HepG2 (cell line): ENCODE measurements at regions of chr7 and their contacts with region 1.

Region 1: DNA sequence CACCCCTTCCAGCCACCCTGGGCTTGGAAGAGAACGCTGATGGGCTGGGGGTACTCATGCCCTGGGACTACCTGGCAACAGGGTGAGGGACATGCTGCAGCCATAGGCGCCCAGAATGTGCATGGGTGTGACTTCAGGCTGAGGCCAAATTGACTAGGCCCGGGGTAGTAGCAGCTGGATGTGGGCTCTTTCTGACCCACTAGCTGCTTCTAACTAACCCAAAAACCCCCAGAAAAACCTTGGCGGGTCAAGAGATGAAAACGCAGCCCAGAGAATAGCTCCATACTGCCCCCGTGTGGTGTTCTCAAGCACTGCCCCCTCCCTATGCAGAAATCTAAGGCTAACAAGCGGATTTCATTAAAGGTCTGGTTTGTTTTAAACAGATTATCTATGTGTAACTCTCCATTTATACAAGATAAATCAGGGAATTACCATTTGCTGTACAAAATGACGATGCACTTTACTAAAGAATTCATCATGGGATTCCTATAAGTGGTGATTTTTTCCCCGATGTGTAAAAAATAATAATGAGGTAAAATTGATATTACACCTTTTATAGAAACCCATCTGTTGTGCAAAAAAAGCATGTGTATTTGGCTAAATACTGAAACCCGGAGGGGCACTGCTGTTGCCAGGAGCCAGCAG is 4.2 kb downstream of the SMARCD3 start:
- DNase-seq: no peak
- ATAC-seq: no peak
- H3K4me3 ChIP-seq: peak overlapping the region in 1 of 3 experiments; percentile 66; a peak in 1 of 6 replicates
- H3K27ac ChIP-seq: no peak overlapping the region
- H3K4me1 ChIP-seq: peaks cover 68% of the 10 kb centered on the region
- H3K27me3 ChIP-seq: peaks cover 7 to 40% of the 10 kb centered on the region in 2 experiments; a peak in 3 of 5 replicates
- CTCF ChIP-seq: peak; percentile 66
- EP300 ChIP-seq: no peak
- POLR2A ChIP-seq: no peak
- RAD21 ChIP-seq: no peak

Region 2: GRCh38 chr7:151080522-151081169 is 163.7 kb before region 1 on chr7 and contains the start of gene FASTK:
- CTCF ChIA-PET with region 1: no interaction called
- POLR2A ChIA-PET with region 1: no interaction called
- in situ Hi-C with region 1: no loop called
- intact Hi-C with region 1: loop called (anchors 10 kb)
- DNase-seq: peak; percentile 77
- ATAC-seq: peak; percentile 72
- H3K4me3 ChIP-seq: peak within 1 kb of the TSS; percentile 85 to 96 (median 88)
- H3K27ac ChIP-seq: peak within 1 kb of the TSS; percentile 85
- H3K4me1 ChIP-seq: peaks cover 45% of the 10 kb centered on the region
- H3K27me3 ChIP-seq: no peaks in the 10 kb centered on the region; a peak in 1 of 5 replicates
- CTCF ChIP-seq: no peak
- EP300 ChIP-seq: peak in 1 of 2 experiments; percentile 20; a peak in 1 of 4 replicates
- POLR2A ChIP-seq: peak in 1 of 2 experiments; percentile 77; a peak in 2 of 4 replicates
- RAD21 ChIP-seq: peak; percentile 42; the same call in 1 of the 2 replicates
- total RNA-seq, gene FASTK: 33.0 and 52.9 TPM in 2 replicates

Region 3: DNA sequence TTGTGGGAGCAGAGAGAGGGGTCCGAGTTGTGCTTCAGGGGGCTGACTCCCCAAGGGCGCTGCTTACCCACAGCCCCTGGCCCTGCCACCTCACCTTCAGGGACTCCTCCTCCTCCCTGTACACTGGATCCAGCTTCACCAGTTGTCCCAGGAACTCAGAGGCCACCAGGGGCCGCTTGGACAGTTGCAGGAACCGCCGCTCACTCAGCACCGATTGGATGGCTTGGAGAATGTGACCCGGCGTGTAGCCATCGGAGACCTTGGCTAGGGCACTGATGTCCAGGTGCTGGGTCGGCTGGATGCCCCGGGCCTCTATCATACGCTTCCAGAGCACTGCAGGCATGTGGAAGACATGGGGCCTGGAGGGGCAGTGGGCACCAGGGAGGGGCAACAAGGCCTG is 52.8 kb before region 1 on chr7:
- CTCF ChIA-PET with region 1: interaction called, 6 read pairs
- POLR2A ChIA-PET with region 1: no interaction called
- in situ Hi-C with region 1: no loop called
- intact Hi-C with region 1: loop called (anchors 2 kb)
- DNase-seq: peak; percentile 39
- ATAC-seq: peak; percentile 89
- H3K4me3 ChIP-seq: no peak overlapping the region
- H3K27ac ChIP-seq: no peak overlapping the region
- H3K4me1 ChIP-seq: no peaks in the 10 kb centered on the region
- H3K27me3 ChIP-seq: peaks cover 9 to 76% of the 10 kb centered on the region in 2 experiments; a peak in 4 of 5 replicates
- CTCF ChIP-seq: peak; percentile 61
- EP300 ChIP-seq: no peak
- POLR2A ChIP-seq: no peak
- RAD21 ChIP-seq: no peak

Region 4: GRCh38 chr7:151232091-151232916 is 12.0 kb before region 1 on chr7 and contains the start of gene CHPF2:
- CTCF ChIA-PET with region 1: interaction called, 4 read pairs
- POLR2A ChIA-PET with region 1: interaction called, 8 read pairs
- in situ Hi-C with region 1: no loop called
- intact Hi-C with region 1: loop called (anchors 2 kb)
- DNase-seq: peak; percentile 66
- ATAC-seq: peak; percentile 96
- H3K4me3 ChIP-seq: peak within 1 kb of the TSS; percentile 90 to 98 (median 91)
- H3K27ac ChIP-seq: peak within 1 kb of the TSS; percentile 62
- H3K4me1 ChIP-seq: peaks cover 34% of the 10 kb centered on the region
- H3K27me3 ChIP-seq: no peaks in the 10 kb centered on the region; a peak in 1 of 5 replicates
- CTCF ChIP-seq: no peak
- EP300 ChIP-seq: no peak
- POLR2A ChIP-seq: peak; percentile 75 to 89; a peak in 3 of 4 replicates
- RAD21 ChIP-seq: 0 out of 2 replicates have a peak, but pooled peaks have one; percentile 1
- total RNA-seq, gene CHPF2: 10.2 and 21.5 TPM in 2 replicates

Region 5: DNA sequence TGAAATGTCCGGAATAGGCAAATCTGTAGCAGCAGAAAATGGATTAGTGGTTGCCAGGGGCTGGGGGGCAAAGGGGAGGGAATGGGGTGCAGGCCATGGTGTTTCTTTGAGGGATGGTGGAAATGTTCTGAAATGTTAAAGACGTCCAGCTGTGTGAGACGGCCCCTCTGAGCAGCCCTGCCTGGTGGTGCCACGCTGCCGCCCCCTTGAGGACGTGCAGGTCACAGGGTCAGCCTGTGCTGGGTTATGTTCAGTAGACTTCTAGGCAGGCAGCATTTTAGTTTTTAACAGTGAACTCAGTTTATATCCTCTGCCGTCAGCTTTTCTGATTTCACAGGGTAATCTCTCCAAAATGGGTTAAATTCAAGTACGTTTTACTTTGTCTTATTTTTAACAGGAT is 106.7 kb after region 1 on chr7:
- CTCF ChIA-PET with region 1: interaction called, 5 read pairs
- POLR2A ChIA-PET with region 1: no interaction called
- in situ Hi-C with region 1: no loop called
- intact Hi-C with region 1: loop called (anchors 5 kb)
- DNase-seq: no peak
- ATAC-seq: peak; percentile 70
- H3K4me3 ChIP-seq: no peak overlapping the region
- H3K27ac ChIP-seq: no peak overlapping the region
- H3K4me1 ChIP-seq: peaks cover 19% of the 10 kb centered on the region
- H3K27me3 ChIP-seq: no peaks in the 10 kb centered on the region
- CTCF ChIP-seq: peak; percentile 54
- EP300 ChIP-seq: no peak
- POLR2A ChIP-seq: no peak
- RAD21 ChIP-seq: no peak

Region 6: DNA sequence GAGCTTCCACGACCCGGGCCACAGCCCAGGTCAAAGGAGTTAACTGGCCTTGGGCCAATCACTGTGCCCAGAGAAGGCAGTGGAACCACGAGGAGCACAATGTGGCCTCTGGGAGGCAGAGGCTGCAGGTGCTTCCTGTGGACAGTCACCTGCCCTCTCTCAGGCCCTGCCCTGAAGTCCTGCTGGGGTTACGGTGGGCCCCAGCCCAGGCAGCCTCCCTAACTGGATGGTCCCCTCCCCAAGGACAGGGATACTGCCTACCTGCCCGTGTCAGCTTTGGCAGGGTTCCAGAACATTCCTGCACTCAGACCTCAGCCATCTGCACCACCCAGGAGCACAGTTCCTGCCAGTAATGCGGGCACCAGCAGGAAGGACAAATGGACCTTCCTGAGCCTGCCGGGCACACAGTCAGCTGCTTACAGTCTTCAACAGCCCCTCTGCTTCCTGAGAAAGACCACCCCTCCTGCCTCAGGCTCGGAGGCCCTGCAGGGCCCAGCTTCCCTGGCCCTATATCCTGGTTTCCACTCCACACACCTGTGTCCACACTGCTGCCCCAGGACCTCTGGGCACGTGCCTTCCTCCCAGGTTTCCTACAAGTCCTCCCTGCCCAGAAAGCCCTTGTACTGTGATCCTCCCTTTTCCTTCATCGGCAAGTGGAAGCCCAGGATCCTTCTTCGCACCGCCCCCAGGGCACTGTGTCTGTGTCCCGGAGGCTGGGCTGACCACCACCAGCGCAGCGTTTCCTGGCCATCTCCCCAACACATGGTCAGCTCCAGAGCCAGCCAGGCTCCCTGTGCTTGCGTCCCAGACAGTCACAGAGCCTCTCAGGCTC is 142.2 kb after region 1 on chr7:
- CTCF ChIA-PET with region 1: no interaction called
- POLR2A ChIA-PET with region 1: no interaction called
- in situ Hi-C with region 1: no loop called
- intact Hi-C with region 1: no loop called
- DNase-seq: no peak
- ATAC-seq: peak; percentile 13
- H3K4me3 ChIP-seq: no peak overlapping the region
- H3K27ac ChIP-seq: no peak overlapping the region
- H3K4me1 ChIP-seq: no peaks in the 10 kb centered on the region
- H3K27me3 ChIP-seq: peaks cover 23 to 95% of the 10 kb centered on the region in 2 experiments
- CTCF ChIP-seq: no peak
- EP300 ChIP-seq: no peak
- POLR2A ChIP-seq: no peak
- RAD21 ChIP-seq: no peak